SK-N-SH (cell line): ENCODE measurements at regions of chrX and their contacts with region 1.

Region 1: GRCh38 chrX:134520860-134521390 is 61.0 kb downstream of the HPRT1 start:
- DNase-seq: peak; percentile 61
- H3K4me3 ChIP-seq: no peak overlapping the region
- H3K27ac ChIP-seq: no peak overlapping the region
- H3K4me1 ChIP-seq: no peaks in the 10 kb centered on the region
- H3K27me3 ChIP-seq: no peaks in the 10 kb centered on the region
- CTCF ChIP-seq: peak; percentile 84
- EP300 ChIP-seq: no peak
- RAD21 ChIP-seq: peak; percentile 81

Region 2: DNA sequence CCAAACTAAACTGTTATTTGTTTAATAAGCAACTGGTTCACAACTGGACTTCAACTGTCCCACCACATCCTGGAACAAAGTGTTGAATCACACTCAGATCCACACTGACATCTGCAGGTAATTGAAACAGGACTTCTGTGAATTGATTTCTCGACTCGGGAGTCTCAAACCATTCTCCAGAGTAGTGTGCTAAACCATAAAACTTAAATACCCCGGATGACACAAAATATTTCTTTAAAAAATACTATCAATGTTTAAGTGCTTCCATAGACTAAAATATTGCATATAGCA is 232.7 kb after region 1 on chrX:
- CTCF ChIA-PET with region 1: interaction called, 22 read pairs
- POLR2A ChIA-PET with region 1: no interaction called
- DNase-seq: no peak
- H3K4me3 ChIP-seq: peak overlapping the region in 1 of 2 experiments; percentile 30; a peak in 1 of 4 replicates
- H3K27ac ChIP-seq: peak overlapping the region; percentile 42 to 76; a peak in 3 of 4 replicates
- H3K4me1 ChIP-seq: no peaks in the 10 kb centered on the region; a peak in 1 of 4 replicates
- H3K27me3 ChIP-seq: no peaks in the 10 kb centered on the region
- CTCF ChIP-seq: peak; percentile 56
- EP300 ChIP-seq: no peak
- RAD21 ChIP-seq: peak; percentile 70

Region 3: DNA sequence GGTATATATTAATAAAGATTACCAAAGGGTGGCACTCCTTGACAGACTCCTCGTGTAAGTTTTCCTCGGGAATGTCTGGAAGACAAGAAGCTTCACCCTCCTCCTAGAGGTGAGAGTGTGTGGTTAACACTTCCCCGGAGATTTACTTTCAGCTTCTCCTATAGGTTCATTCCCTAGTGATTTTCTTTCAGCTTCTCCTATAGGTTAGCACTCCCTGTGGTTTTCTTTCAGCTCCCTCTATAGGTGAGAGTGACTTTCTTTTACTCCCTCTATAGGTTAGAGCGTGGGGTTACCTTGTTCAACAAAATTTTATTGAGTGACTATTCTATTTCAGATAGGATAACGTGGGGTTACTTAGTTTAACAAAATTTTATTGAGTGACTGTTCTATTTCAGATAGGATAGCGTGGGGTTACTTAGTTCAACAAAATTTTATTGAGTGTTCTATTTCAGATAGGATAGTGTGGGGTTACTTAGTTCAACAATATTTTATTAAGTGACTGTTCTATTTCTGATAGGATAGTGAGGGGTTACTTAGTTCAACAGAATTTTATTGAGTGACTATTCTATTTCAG is 243.4 kb after region 1 on chrX:
- CTCF ChIA-PET with region 1: interaction called, 17 read pairs
- POLR2A ChIA-PET with region 1: no interaction called
- DNase-seq: peak; percentile 66
- H3K4me3 ChIP-seq: peak overlapping the region in 1 of 2 experiments; percentile 15; a peak in 1 of 4 replicates
- H3K27ac ChIP-seq: no peak overlapping the region
- H3K4me1 ChIP-seq: no peaks in the 10 kb centered on the region
- H3K27me3 ChIP-seq: no peaks in the 10 kb centered on the region
- CTCF ChIP-seq: peak; percentile 55
- EP300 ChIP-seq: no peak
- RAD21 ChIP-seq: peak; percentile 45

Region 4: DNA sequence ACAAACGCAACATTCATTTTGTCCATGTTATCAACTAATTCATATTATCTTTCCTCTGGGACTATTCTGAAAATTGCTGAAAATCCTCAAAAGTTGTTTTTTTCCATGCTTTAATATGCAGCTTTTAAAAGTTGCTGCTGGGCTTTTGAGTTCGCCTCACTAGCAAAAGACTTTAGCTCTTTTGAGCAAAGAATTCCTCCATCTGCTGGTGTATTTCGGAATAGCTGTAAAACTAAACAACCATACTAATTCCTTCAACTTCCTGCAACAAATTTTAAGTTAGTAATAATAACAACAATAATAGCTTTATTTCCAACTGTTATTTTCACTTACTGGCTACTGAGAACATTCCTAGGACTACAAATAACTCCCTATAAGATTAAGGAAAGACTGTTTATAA is 261.9 kb after region 1 on chrX:
- CTCF ChIA-PET with region 1: interaction called, 12 read pairs
- POLR2A ChIA-PET with region 1: no interaction called
- DNase-seq: peak; percentile 23
- H3K4me3 ChIP-seq: no peak overlapping the region
- H3K27ac ChIP-seq: no peak overlapping the region; a peak in 1 of 4 replicates
- H3K4me1 ChIP-seq: no peaks in the 10 kb centered on the region
- H3K27me3 ChIP-seq: no peaks in the 10 kb centered on the region
- CTCF ChIP-seq: peak; percentile 82
- EP300 ChIP-seq: no peak
- RAD21 ChIP-seq: peak; percentile 73